Activated naive CD8-positive, alpha-beta T cell treated with anti-CD3 and anti-CD28 coated beads, Interleukin-2, amount 10 ng/mL, durations not matched to agents 7 days and 5 days (primary cell): ENCODE measurements at regions of chr4 and their contacts with region 1.

Region 1: DNA sequence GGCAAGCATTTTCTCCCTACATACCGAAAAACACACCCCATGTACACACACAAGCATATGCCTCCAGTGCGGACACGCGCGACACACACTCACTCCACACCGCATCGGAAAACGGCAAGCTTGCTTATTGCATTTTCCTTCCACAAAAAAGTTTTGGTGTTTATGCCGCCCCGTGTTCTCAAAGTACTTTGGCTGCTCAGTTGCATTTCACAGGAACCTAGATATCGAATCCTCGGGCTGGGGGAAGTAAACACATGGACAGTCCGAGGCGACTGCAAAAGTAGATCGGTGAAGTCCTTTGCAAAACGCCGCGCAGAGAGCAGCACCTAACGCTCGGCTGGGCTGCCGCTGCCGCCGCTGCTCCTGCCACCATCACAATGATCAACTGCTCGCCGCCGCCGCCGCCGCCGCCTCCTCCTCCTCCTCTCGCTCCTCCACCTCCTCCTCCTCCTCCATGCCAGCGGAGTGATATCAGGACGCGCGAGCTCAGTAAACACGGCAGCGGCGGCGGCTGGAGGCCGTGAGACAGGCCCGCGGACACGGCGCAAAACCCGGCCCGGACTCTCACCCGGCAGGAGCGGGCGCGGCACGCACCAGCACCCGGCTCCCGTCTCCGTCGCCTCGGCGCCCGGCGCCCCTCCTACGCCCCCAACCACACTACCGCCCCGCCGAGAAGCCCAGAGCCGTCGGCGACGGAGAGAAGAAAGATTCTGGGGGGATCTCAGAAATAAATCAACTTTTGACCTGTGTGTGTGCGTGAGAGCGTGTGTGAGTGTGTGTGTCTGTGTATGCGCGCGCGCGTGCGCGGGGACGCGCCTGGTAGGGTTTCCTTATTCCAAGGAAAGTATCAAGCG is at the start of gene MAML3:
- DNase-seq: peak; percentile 90
- ATAC-seq: peak; percentile 39
- H3K4me3 Mint-ChIP-seq: peak within 1 kb of the TSS; percentile 96
- H3K27ac Mint-ChIP-seq: peak within 1 kb of the TSS; percentile 88
- H3K4me1 Mint-ChIP-seq: peaks cover 36% of the 10 kb centered on the region
- H3K27me3 Mint-ChIP-seq: peaks cover 1% of the 10 kb centered on the region
- total RNA-seq, gene MAML3: 4.6 to 4.7 TPM

Region 2: DNA sequence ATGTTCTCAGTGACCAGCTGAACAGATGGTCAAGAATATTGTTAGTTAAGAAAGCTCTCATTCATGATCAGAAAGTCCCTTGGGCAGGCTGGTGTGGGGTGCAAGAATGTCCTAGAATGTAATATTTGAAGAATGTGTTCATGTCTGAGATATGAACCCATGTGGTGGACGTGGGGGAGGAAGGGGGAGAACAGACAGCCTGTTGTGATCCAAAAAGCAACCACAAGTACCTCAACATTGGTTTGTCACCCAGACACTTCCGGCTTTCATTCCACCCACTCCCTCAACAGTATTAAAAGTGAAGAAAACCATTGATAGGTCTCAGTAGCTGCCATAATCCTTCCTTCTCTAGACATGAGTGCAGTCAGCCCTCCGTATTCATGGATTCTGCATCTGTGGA is 82.1 kb before region 1 on chr4:
- POLR2A ChIA-PET with region 1: interaction called, 20 read pairs
- DNase-seq: peak; percentile 60
- ATAC-seq: peak; percentile 78
- H3K4me3 Mint-ChIP-seq: peak overlapping the region; percentile 73
- H3K27ac Mint-ChIP-seq: peak overlapping the region; percentile 95
- H3K4me1 Mint-ChIP-seq: peaks cover 44% of the 10 kb centered on the region
- H3K27me3 Mint-ChIP-seq: peaks cover 5% of the 10 kb centered on the region

Region 3: GRCh38 chr4:140103676-140104075 is 50.3 kb before region 1 on chr4:
- POLR2A ChIA-PET with region 1: interaction called, 16 read pairs
- DNase-seq: no peak
- ATAC-seq: peak; percentile 84
- H3K4me3 Mint-ChIP-seq: peak overlapping the region; percentile 12
- H3K27ac Mint-ChIP-seq: peak overlapping the region; percentile 72
- H3K4me1 Mint-ChIP-seq: peaks cover 57% of the 10 kb centered on the region
- H3K27me3 Mint-ChIP-seq: no peaks in the 10 kb centered on the region

Region 4: DNA sequence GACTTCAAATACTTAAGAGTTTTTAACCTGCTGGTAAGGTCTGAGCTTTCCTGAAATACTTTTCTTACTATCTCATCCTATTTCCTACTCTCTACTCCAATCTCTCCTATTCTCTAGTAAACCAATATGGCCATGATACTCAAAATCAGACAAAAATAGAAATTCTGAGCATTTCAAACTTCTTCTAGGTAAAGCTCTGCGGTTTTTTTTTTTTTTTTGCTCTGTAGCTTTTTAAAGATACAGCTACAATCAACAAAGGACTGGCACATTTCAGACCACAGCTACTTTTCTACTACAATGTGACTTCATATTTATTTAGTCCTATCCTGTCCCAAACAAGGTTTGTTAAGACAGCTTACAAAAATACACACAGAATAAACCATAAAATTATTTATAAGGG is 31.1 kb before region 1 on chr4:
- POLR2A ChIA-PET with region 1: interaction called, 10 read pairs
- DNase-seq: no peak
- ATAC-seq: peak; percentile 82
- H3K4me3 Mint-ChIP-seq: peak overlapping the region; percentile 50
- H3K27ac Mint-ChIP-seq: peak overlapping the region; percentile 60
- H3K4me1 Mint-ChIP-seq: peaks cover 26% of the 10 kb centered on the region
- H3K27me3 Mint-ChIP-seq: no peaks in the 10 kb centered on the region

Region 5: GRCh38 chr4:140168474-140168873 is 14.5 kb after region 1 on chr4:
- POLR2A ChIA-PET with region 1: no interaction called
- DNase-seq: no peak
- ATAC-seq: no peak
- H3K4me3 Mint-ChIP-seq: no peak overlapping the region
- H3K27ac Mint-ChIP-seq: no peak overlapping the region
- H3K4me1 Mint-ChIP-seq: no peaks in the 10 kb centered on the region
- H3K27me3 Mint-ChIP-seq: peaks cover 3% of the 10 kb centered on the region

Region 6: DNA sequence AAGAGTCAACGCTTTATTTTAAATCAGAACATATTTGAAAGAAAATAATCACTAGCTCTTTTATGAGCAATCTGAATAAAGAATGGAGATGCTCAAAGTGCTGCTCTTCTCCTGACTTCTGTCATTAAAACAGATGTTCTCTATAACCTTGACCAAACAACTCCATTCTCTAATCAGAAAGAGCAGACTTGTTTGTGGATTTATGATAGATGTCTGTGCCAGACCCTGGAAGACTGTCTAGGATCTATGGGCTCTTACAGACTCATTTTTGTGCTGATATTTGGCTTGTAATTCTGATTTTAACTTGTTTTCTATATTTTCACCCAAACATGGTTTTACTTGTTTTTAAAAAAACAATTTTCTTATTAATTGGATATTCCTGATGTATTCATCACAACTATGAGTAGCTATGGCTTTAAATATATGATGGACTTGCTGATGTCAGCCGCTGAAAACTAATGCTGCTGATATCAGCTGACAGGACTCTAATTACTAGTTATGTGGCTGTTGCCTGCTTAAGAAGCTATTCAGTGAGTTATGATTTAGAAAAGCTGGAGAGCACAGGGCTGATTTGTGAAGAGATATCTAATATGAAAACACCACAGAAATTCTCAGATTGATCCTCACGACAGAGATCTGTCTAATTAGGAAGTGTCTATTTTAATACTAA is 31.6 kb after region 1 on chr4:
- POLR2A ChIA-PET with region 1: no interaction called
- DNase-seq: no peak
- ATAC-seq: no peak
- H3K4me3 Mint-ChIP-seq: no peak overlapping the region
- H3K27ac Mint-ChIP-seq: no peak overlapping the region
- H3K4me1 Mint-ChIP-seq: no peaks in the 10 kb centered on the region
- H3K27me3 Mint-ChIP-seq: peaks cover 15% of the 10 kb centered on the region

Region 7: DNA sequence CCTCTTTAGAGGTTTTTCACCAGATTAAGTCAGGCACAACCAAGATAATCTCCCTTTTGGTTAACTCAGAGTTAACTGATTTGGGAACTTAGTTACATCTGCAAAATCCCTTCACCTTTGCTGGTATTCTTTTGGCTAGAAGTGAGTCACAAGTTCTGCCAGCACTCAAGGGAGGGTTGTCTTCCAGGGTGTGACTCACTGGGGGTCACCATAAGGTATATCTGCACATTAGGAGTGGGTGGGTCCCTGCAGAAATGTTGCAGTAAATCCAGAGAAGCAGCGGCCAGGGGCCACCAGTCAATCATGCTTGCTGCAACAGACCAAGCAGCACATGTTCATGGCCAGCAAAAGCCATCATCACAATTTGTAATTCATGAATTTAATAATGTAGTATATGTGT is 59.8 kb after region 1 on chr4:
- POLR2A ChIA-PET with region 1: no interaction called
- DNase-seq: no peak
- ATAC-seq: no peak
- H3K4me3 Mint-ChIP-seq: no peak overlapping the region
- H3K27ac Mint-ChIP-seq: no peak overlapping the region
- H3K4me1 Mint-ChIP-seq: no peaks in the 10 kb centered on the region
- H3K27me3 Mint-ChIP-seq: peaks cover 13% of the 10 kb centered on the region